ENCODE measurements at regions of chr6 and their contacts with region 1.

Region 1: GRCh38 chr6:112043032-112044007 is 10.6 kb upstream of the CCN6 start:
- DNase-seq: peak; percentile 91
- ATAC-seq: peak; percentile 96
- H3K4me3 ChIP-seq: peak overlapping the region; percentile 53
- H3K27ac ChIP-seq: peak overlapping the region; percentile 13
- H3K4me1 ChIP-seq: peaks cover 11% of the 10 kb centered on the region
- H3K27me3 ChIP-seq: no peaks in the 10 kb centered on the region
- CTCF ChIP-seq: peak; percentile 98
- POLR2A ChIP-seq: peak; percentile 68; the same call in 1 of the 2 replicates
- RAD21 ChIP-seq: peak; percentile 96

Region 2: DNA sequence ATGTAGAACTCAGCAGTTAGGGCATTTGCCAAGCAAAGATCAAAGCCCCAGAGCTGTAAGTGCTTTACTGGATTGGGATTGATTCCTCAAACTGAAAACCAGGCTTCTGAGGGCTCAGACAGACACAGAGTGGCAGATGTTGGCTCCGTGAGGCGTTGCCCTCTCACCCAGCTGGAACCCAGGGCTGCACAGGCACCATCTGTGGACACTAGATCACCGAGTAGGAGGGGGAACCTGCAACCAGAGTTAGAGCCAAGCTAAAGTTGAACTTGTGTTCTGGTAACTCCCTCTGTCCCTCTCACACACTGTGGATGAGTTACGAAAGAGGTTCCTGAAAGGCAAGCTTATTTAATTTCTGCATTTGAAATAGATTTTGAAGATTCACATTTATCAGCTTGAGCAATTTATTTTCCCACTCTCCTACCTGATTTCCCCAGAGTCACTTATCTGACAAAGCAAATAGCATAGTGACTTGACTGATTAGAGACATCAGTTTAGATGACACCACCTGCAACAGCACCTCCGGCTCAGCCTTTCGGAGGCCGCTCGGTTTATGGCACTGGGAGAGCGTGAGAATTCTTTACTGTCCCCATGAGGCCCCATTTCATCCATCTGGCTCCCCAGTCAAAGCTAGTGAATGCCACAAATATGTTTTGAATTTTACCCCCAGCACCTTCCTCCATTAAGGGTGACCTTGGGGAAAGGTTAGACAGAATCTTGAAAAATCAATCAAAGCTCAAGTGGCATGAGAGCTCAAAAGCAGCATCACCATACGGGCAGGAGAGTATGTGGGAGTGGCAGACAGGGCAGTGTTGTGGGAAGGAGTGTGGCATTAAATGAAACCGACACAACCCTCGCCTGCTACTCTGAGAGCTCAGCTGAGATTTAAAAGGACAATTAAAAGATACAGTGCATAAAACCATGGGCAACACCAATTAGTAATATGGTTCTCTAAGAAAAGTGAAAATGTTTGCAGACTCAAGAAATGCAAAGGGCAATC is 1013.0 kb before region 1 on chr6:
- CTCF ChIA-PET with region 1: no interaction called
- POLR2A ChIA-PET with region 1: no interaction called
- dilution Hi-C with region 1: no loop called
- in situ Hi-C with region 1: loop called (anchors 25 kb)
- intact Hi-C with region 1: no loop called
- DNase-seq: no peak
- ATAC-seq: peak; percentile 27
- H3K4me3 ChIP-seq: no peak overlapping the region
- H3K27ac ChIP-seq: no peak overlapping the region
- H3K4me1 ChIP-seq: no peaks in the 10 kb centered on the region; the same call in 1 of the 2 replicates
- H3K27me3 ChIP-seq: no peaks in the 10 kb centered on the region
- CTCF ChIP-seq: no peak
- POLR2A ChIP-seq: no peak
- RAD21 ChIP-seq: no peak

Region 3: DNA sequence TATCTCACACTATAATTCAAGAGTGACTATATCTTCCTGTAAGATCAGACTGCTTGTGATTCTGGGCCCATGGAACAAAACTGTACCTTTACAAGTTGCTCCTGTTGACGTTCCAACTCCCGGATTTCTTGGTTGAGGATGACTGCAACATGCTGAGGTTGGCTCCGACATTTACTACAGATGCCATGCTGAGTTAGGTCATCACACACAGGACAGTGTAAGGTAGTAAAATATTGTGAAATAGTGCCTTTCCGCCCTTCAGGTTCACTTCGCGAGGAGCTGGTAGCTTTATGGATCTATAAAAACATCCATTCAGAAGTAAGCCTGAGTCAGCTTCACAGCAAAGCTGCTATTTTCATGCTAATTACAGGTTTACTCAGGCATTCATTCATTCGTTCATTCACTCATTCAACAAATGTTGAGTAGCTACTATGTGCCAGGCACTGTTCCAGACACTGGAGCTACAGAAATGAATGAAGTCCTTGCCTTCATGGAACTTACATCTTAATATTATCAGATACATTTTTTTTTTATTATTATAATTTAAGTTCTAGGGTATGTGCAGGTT is 736.0 kb before region 1 on chr6:
- CTCF ChIA-PET with region 1: no interaction called
- POLR2A ChIA-PET with region 1: no interaction called
- dilution Hi-C with region 1: no loop called
- in situ Hi-C with region 1: no loop called
- intact Hi-C with region 1: no loop called
- DNase-seq: no peak
- ATAC-seq: no peak
- H3K4me3 ChIP-seq: no peak overlapping the region
- H3K27ac ChIP-seq: no peak overlapping the region
- H3K4me1 ChIP-seq: no peaks in the 10 kb centered on the region
- H3K27me3 ChIP-seq: no peaks in the 10 kb centered on the region
- CTCF ChIP-seq: no peak
- POLR2A ChIP-seq: no peak
- RAD21 ChIP-seq: no peak

Region 4: GRCh38 chr6:111361648-111362047 is 681.7 kb before region 1 on chr6:
- CTCF ChIA-PET with region 1: no interaction called
- POLR2A ChIA-PET with region 1: no interaction called
- dilution Hi-C with region 1: no loop called
- in situ Hi-C with region 1: loop called (anchors 25 kb)
- intact Hi-C with region 1: no loop called
- DNase-seq: peak; percentile 43
- ATAC-seq: peak; percentile 73
- H3K4me3 ChIP-seq: no peak overlapping the region
- H3K27ac ChIP-seq: no peak overlapping the region
- H3K4me1 ChIP-seq: peaks cover 4% of the 10 kb centered on the region
- H3K27me3 ChIP-seq: no peaks in the 10 kb centered on the region
- CTCF ChIP-seq: peak; percentile 52
- POLR2A ChIP-seq: no peak
- RAD21 ChIP-seq: peak; percentile 65

Region 5: DNA sequence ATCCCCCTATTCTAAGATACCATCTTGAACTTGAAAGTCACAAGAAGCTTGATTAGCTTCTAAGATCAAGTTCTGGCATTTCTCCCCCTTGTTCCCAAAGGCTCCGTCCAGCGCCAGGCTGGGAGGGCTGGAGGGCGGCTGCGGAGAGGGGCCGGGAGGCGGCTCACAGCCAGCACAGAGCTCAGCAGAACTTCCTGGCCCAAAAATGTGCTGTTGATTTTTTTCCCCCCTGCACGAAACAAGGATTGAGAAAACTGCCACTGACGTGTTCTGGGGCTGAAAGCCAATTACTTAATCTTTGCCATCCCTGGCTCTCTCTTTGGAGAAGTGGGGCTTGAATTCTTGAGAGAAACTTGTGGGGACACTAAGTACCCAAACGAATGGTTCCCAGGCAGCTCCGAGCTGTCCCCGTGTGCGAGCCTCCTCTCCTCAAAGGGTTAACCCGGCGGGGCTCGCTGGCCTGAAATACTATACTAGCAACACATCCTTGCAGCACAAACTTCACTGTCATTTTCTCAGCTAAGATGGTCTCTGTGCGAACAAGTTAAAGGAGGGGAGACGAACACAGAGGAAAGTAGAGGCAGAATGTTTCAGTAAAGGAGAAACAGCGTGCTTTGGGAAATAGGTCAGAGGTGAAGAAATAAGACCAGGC is 438.1 kb before region 1 on chr6:
- CTCF ChIA-PET with region 1: no interaction called
- POLR2A ChIA-PET with region 1: no interaction called
- dilution Hi-C with region 1: no loop called
- in situ Hi-C with region 1: no loop called
- intact Hi-C with region 1: loop called (anchors 5 kb)
- DNase-seq: peak; percentile 86
- ATAC-seq: peak; percentile 42
- H3K4me3 ChIP-seq: peak overlapping the region; percentile 55
- H3K27ac ChIP-seq: peak overlapping the region; percentile 97
- H3K4me1 ChIP-seq: peaks cover 30% of the 10 kb centered on the region
- H3K27me3 ChIP-seq: no peaks in the 10 kb centered on the region
- CTCF ChIP-seq: no peak
- POLR2A ChIP-seq: no peak; the same call in 1 of the 2 replicates
- RAD21 ChIP-seq: peak; percentile 18; the same call in 1 of the 2 replicates

Region 6: DNA sequence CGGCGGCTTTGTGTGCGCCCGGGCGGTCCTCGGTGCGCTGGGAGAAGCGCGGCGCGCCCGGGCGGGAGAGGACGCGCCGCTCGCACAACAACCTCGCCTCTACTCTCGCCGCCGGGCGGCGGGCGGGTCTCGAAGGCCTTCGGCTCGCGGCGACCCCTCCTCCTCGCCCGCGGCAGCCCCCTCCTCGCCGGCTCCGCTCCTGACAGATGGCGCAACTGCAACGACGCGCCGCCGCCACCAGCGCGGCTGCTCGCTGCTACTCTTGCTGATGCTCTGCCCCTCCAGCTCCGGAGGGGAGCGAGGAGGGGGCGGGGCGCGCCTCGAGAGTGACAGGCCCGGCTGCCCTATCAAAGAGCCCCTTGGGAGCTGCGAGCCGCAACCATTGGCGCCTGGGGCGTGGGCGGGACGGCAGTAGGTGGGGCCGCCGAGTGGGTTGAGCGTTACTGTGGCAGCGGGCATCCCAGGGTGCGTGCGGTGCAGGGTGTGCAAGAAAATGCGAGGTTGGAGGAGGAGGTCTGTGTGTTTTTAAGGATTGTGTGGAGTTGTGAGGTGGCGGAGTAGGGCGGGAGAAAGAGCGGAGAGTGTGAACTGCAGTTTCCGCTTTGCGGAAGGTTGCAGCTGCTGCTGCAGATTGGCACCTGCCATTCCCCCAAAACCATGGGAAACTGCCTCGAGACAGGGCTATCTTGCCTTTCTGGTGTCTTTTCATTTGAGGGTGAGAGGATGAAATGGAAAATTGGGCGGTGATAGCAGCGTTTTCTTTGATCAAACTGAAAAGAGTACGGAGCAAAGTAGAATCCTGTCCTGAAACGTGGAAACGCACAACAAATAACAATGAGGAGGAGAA is 169.9 kb before region 1 on chr6 and contains the start of gene FYN:
- CTCF ChIA-PET with region 1: no interaction called
- POLR2A ChIA-PET with region 1: no interaction called
- dilution Hi-C with region 1: no loop called
- in situ Hi-C with region 1: no loop called
- intact Hi-C with region 1: loop called (anchors 1 kb)
- DNase-seq: peak; percentile 92
- ATAC-seq: peak; percentile 99
- H3K4me3 ChIP-seq: peak within 1 kb of the TSS; percentile 59
- H3K27ac ChIP-seq: peak within 1 kb of the TSS; percentile 64
- H3K4me1 ChIP-seq: peaks cover 1% of the 10 kb centered on the region; the same call in 1 of the 2 replicates
- H3K27me3 ChIP-seq: 0 out of 2 replicates have a peak, but pooled peaks cover 2% of the 10 kb centered on the region
- CTCF ChIP-seq: peak; percentile 33
- POLR2A ChIP-seq: peak; percentile 81
- RAD21 ChIP-seq: peak; percentile 54
- total RNA-seq, gene FYN: 36.4 and 41.1 TPM in 2 replicates

Region 7: GRCh38 chr6:111997078-111997852 is 46.1 kb before region 1 on chr6:
- CTCF ChIA-PET with region 1: no interaction called
- POLR2A ChIA-PET with region 1: no interaction called
- dilution Hi-C with region 1: no loop called
- in situ Hi-C with region 1: no loop called
- intact Hi-C with region 1: loop called (anchors 1 kb)
- DNase-seq: peak; percentile 80
- ATAC-seq: peak; percentile 96
- H3K4me3 ChIP-seq: no peak overlapping the region
- H3K27ac ChIP-seq: no peak overlapping the region
- H3K4me1 ChIP-seq: no peaks in the 10 kb centered on the region
- H3K27me3 ChIP-seq: peaks cover 2% of the 10 kb centered on the region; the same call in 1 of the 2 replicates
- CTCF ChIP-seq: peak; percentile 95
- POLR2A ChIP-seq: 0 out of 2 replicates have a peak, but pooled peaks have one; percentile 53
- RAD21 ChIP-seq: peak; percentile 98

Measured in IMR-90 (cell line).